ENCODE measurements at regions of chr11 and their contacts with region 1.

Region 1: DNA sequence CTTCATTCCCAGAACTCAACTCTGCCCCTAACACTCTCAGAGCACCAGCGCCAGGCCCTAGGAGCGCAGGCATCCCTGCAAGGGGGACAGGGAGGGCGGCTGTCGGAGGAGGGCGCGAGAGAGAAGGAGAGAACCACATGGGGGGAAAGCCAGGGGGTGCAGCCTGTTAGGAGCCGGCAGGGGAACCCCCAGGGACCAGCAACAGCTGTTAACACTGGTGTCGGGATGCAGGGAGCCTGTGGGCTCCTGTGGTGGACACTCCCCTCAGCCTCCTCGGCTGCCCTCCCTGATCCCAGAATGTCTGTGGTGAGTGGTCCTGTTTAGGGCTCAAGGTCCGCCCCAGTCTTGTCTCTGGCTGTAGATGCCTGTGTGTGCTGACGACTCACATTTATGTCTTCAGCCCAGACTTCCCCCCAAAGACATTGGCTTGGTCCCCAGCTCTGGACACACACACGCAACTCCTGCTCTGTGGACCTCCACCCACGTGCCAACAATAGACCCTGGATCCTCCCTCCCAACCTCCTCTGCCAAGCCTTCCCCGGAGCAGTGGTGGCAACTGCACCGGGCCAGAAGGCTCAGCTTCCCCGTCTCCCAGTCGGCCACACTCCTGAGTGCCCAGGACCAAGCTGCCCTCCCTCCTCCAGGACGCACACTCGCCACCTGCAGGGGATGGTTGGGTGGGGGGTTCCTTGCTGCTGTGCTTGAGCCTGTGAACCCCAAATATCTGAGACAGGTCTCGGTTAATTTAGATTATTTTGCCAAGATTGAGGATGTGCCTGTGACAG is 817 bp upstream of the IFITM5 start:
- DNase-seq: peak in 1 of 4 donors; percentile 36
- ATAC-seq: no peak
- H3K4me3 ChIP-seq: no peak overlapping the region
- H3K27ac ChIP-seq: peak overlapping the region in 1 of 4 donors; percentile 18
- H3K4me1 ChIP-seq: peaks cover 51% of the 10 kb centered on the region
- H3K27me3 ChIP-seq: no peaks in the 10 kb centered on the region
- CTCF ChIP-seq: no peak
- POLR2A ChIP-seq: peak; percentile 12 to 38 (median 37)

Region 2: GRCh38 chr11:199782-200181 is 100.4 kb before region 1 on chr11:
- intact Hi-C with region 1: no loop called
- DNase-seq: peak in 1 of 4 donors; percentile 12
- ATAC-seq: peak; percentile 10
- H3K4me3 ChIP-seq: no peak overlapping the region
- H3K27ac ChIP-seq: no peak overlapping the region
- H3K4me1 ChIP-seq: peaks cover 12% of the 10 kb centered on the region
- H3K27me3 ChIP-seq: no peaks in the 10 kb centered on the region
- CTCF ChIP-seq: no peak
- POLR2A ChIP-seq: no peak

Region 3: GRCh38 chr11:236774-237767 is 63.1 kb before region 1 on chr11 and contains the start of gene PSMD13:
- intact Hi-C with region 1: loop called (anchors 5 kb)
- DNase-seq: peak; percentile 83 to 87 (median 86)
- ATAC-seq: peak; percentile 89
- H3K4me3 ChIP-seq: peak within 1 kb of the TSS; percentile 81 to 100
- H3K27ac ChIP-seq: peak within 1 kb of the TSS; percentile 82 to 99 (median 93)
- H3K4me1 ChIP-seq: peaks cover 29% of the 10 kb centered on the region
- H3K27me3 ChIP-seq: no peaks in the 10 kb centered on the region
- CTCF ChIP-seq: peak in 2 of 7 experiments; percentile 12 to 38
- POLR2A ChIP-seq: peak; percentile 24 to 70 (median 54)
- total RNA-seq, gene PSMD13: 40.2 to 52.4 TPM

Region 4: GRCh38 chr11:460331-461199 is 160.4 kb after region 1 on chr11:
- intact Hi-C with region 1: no loop called
- DNase-seq: no peak
- ATAC-seq: no peak
- H3K4me3 ChIP-seq: no peak overlapping the region
- H3K27ac ChIP-seq: no peak overlapping the region
- H3K4me1 ChIP-seq: no peaks in the 10 kb centered on the region
- H3K27me3 ChIP-seq: no peaks in the 10 kb centered on the region
- CTCF ChIP-seq: no peak
- POLR2A ChIP-seq: no peak